Activated naive CD4-positive, alpha-beta T cell treated with anti-CD3 and anti-CD28 coated beads for 36 hours (primary cell): ENCODE measurements at regions of chr1 and their contacts with region 1.

Region 1: GRCh38 chr1:17661546-17662157 is 93.5 kb upstream of the ACTL8 start:
- DNase-seq: peak; percentile 78
- H3K4me3 Mint-ChIP-seq: no peak overlapping the region
- H3K27ac Mint-ChIP-seq: no peak overlapping the region
- H3K4me1 Mint-ChIP-seq: no peaks in the 10 kb centered on the region
- H3K27me3 Mint-ChIP-seq: no peaks in the 10 kb centered on the region

Region 2: DNA sequence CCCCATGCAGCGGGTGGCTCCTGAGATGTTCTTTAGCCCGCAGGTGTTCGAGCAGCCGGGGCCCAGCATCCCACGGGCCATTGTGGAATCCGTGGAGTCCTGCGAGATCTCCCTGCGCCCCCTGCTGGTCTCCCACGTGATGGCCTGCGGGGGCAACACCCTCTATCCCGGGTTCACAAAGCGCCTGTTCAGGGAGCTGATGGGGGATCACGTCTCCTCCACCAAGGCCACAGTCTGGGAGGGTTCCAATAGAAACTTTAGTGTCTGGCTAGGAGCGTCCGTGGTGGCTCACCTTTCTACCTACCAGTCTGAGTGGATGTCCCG is 164.5 kb after region 1 on chr1:
- CTCF ChIA-PET with region 1: interaction called, 10 read pairs
- intact Hi-C with region 1: loop called (anchors 10 kb)
- DNase-seq: peak; percentile 37
- H3K4me3 Mint-ChIP-seq: no peak overlapping the region
- H3K27ac Mint-ChIP-seq: no peak overlapping the region
- H3K4me1 Mint-ChIP-seq: no peaks in the 10 kb centered on the region
- H3K27me3 Mint-ChIP-seq: peaks cover 32% of the 10 kb centered on the region

Region 3: GRCh38 chr1:18100491-18101063 is 438.9 kb after region 1 on chr1:
- CTCF ChIA-PET with region 1: interaction called, 11 read pairs
- intact Hi-C with region 1: loop called (anchors 1 kb)
- DNase-seq: peak; percentile 76
- H3K4me3 Mint-ChIP-seq: no peak overlapping the region
- H3K27ac Mint-ChIP-seq: no peak overlapping the region
- H3K4me1 Mint-ChIP-seq: no peaks in the 10 kb centered on the region
- H3K27me3 Mint-ChIP-seq: peaks cover 29% of the 10 kb centered on the region

Region 4: DNA sequence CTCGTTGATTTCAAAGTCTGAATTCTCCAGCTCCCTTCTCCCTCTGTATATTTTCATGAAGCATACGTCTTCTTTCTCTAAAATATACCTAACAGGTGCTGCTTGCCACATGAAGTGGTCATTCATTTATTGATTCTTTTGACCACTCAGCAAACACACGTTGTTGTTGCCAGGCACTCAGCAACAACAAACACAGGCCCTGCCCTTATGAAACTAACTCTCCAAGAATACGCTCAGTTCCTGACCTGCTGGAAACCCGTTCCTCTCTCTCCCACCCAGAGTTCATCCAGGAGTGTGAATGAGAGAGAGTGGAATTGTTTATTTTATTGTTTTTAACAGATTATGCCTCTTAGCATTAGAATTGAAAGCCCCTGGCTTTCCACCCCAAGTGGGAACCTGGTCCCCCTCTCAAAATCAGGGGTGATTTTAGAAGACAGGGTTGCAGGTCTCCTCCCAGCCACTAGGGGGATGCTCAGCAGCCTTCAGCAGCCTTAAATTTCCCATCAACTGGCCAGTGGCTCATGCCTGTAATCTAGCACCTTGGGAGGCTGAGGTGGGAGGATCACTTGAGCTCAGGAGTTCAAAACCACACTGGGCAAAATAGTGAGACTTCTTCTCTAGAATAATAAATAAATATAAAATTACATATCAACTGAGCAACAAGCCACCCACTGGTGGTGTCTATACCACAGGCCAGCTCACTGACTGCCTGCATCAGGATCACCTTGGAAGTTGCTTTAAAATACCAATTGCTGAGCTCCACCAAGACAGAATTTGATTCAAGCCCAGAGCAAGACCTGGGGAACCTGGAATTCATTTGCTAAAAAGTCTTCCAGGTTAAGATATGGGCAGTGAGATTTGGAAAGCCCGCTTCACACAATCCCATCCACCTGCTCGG is 638.0 kb after region 1 on chr1:
- CTCF ChIA-PET with region 1: interaction called, 4 read pairs
- intact Hi-C with region 1: loop called (anchors 5 kb)
- DNase-seq: peak; percentile 22
- H3K4me3 Mint-ChIP-seq: no peak overlapping the region
- H3K27ac Mint-ChIP-seq: no peak overlapping the region
- H3K4me1 Mint-ChIP-seq: no peaks in the 10 kb centered on the region
- H3K27me3 Mint-ChIP-seq: peaks cover 36% of the 10 kb centered on the region

Region 5: DNA sequence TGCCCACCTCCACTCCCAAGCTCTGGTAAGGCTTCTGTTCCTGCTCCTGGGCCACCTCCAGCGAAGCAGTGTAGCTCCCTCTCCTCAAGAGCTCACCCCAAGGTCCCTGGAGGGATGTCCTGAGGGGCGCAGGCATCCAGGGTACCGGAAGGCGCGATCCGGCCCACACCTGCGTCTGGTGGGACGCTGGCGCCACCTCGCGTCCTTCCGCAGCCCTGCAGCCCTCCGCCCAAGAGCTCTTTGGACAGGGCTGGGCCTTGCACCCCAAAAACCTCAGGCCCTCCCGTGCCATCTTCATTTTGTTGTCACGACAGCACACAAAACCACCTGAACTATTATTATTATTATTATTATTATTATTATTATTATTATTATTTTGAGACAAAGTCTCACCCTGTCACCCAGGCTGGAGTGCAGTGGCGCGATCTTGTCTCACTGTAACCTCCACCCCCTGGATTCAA is 919.8 kb after region 1 on chr1:
- CTCF ChIA-PET with region 1: interaction called, 4 read pairs
- intact Hi-C with region 1: loop called (anchors 10 kb)
- DNase-seq: peak; percentile 60
- H3K4me3 Mint-ChIP-seq: no peak overlapping the region
- H3K27ac Mint-ChIP-seq: no peak overlapping the region
- H3K4me1 Mint-ChIP-seq: no peaks in the 10 kb centered on the region
- H3K27me3 Mint-ChIP-seq: peaks cover 9% of the 10 kb centered on the region